Common myeloid progenitor, CD34-positive (primary cell): ENCODE measurements at regions of chr19 and their contacts with region 1.

Region 1: DNA sequence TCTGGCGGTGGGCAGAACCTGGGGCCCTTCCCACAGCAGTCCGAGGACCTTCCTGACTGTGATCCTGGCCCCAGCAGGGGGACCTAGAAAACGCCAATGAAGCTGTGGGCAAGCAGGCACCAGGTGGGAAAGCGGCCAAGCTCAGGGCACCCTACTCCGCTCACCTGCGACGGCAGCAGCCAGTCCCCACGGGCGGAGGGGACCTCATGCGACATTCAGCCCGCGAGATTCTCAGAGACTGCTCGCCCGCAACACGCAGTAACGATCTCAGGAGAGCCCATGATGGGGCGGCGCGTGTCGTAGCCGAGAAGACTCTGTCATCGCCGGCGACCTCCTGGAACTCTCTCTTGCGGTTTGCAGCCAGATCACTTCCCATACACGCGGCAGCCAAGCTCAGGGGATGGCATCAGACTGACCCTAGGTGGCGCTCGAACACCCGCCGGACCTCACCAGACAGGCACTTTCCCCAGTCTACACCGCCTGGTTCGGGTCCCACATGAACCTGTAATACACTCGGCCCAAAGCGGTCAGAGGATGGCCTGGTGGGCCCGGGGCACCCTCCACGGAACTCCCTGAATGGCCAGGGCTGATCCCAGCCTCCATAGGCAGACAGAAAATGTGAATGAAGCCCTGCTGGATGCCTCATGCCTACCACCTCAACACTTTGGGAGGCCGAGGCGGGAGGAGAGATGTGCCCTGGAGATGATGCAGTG is 26.5 kb downstream of the MAN2B1 start:
- DNase-seq: peak; percentile 93 to 96 (median 95)
- H3K4me3 ChIP-seq: peak overlapping the region in 5 of 7 experiments; percentile 17 to 77 (median 64)
- H3K27ac ChIP-seq: no peak overlapping the region
- H3K4me1 ChIP-seq: peaks cover 0 to 11% (median 8%) of the 10 kb centered on the region in 4 experiments
- H3K27me3 ChIP-seq: no peaks in the 10 kb centered on the region

Region 2: GRCh38 chr19:12628040-12629022 is 11.7 kb before region 1 on chr19:
- CTCF ChIA-PET with region 1: interaction called, 13 read pairs
- POLR2A ChIA-PET with region 1: no interaction called
- DNase-seq: peak in 2 of 3 donors; percentile 21 to 58
- H3K4me3 ChIP-seq: peak overlapping the region in 1 of 7 experiments; percentile 19
- H3K27ac ChIP-seq: no peak overlapping the region
- H3K4me1 ChIP-seq: no peaks in the 10 kb centered on the region
- H3K27me3 ChIP-seq: no peaks in the 10 kb centered on the region